Esophagus squamous epithelium (tissue), 5 donors: ENCODE measurements at regions of chr18 and their contacts with region 1.

Region 1: DNA sequence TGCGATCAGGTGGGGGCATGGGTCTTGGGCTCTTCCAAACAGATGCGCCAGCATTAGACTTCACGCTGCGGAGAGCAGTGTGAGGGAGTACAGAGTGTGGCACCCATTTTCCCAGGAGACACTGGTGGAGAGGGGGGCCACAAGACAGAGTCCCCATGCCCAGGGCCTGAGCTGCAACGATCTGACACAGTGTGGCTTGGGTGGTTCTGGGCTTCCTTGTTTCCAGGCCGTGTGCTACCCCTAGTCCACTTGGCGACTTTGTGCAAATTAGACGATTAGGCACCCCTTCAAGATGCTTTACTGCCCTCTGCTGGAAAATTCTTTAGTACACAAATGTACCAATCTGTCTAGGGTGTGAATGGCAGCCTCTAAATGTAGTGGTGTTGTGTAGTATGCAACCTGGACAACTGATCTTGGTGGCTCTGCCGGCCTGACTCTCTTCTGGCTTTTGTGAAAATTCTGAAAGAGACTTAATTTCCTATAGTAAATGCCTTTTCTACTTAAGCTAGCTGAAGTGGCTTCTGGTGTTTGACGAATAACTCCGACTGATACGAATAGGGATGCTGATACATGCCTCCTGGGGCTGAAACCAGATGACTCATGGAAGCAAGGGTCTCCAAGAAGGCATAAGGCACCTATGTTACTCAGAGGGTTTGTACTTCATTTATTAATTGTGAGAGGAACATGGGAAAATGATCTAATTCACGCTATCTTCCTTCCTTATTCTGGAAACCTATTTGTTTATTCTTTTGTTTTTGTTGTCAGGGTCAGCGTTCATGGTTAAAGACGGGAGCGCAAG is 92.3 kb upstream of the SMAD2 start:
- DNase-seq: no peak
- H3K4me3 ChIP-seq: no peak overlapping the region
- H3K27ac ChIP-seq: peak overlapping the region in 2 of 4 donors; percentile 55 to 65
- H3K4me1 ChIP-seq: peaks cover 18 to 73% (median 21%) of the 10 kb centered on the region in 3 donors
- H3K27me3 ChIP-seq: peaks cover 0 to 19% (median 0%) of the 10 kb centered on the region in 4 donors
- CTCF ChIP-seq: peak in 5 of 6 experiments; percentile 44 to 72 (median 53)
- POLR2A ChIP-seq: no peak

Region 2: DNA sequence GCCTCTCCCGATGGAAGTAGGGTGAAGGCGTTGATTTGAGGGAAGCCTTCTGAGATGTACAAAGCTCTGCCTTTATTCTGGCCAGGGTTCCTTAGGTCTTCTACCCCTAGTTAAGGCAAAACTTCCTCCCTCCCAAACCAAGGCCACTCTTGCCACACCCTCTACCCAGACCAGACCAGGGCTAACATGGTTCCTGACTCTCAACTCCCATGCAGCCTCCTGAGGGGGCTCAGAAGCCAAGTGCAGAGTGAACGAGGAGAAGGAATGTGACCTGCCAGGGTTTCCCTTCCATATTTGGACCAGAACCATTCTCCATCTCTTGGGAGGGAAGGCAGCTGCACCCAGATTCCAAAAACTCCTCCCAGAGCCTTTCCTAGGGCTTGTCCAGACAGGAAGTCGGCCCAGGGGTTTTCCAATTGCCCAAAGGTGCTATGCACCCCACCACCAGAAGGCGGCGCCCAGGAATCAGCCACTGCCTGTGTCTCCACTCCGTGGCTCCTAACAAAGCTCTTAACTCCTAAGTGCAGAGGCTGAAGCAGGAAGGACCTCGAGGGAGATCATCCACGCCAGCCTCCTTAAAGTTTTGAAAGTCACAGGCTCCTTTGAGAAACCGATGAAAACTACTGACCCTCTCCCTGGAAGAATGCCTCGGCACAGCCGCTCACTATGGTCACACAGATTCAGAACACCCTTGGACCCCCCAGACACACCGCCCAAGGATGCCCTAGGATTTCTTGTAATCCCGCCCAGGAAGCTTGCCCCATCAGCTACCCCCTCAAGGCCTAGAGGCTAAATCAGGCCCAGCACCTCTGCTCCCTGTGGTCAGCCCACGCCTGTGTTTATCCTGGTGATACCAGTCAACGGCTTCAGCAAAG is 250.1 kb before region 1 on chr18:
- intact Hi-C with region 1: loop called (anchors 5 kb)
- DNase-seq: no peak
- H3K4me3 ChIP-seq: no peak overlapping the region
- H3K27ac ChIP-seq: no peak overlapping the region
- H3K4me1 ChIP-seq: peaks cover 0 to 4% (median 0%) of the 10 kb centered on the region in 3 donors
- H3K27me3 ChIP-seq: peaks cover 0 to 14% (median 0%) of the 10 kb centered on the region in 4 donors
- CTCF ChIP-seq: peak; percentile 47 to 90 (median 78)
- POLR2A ChIP-seq: no peak

Region 3: GRCh38 chr18:48317781-48318381 is 295.2 kb after region 1 on chr18:
- intact Hi-C with region 1: no loop called
- DNase-seq: no peak
- H3K4me3 ChIP-seq: no peak overlapping the region
- H3K27ac ChIP-seq: no peak overlapping the region
- H3K4me1 ChIP-seq: peaks cover 0 to 26% (median 0%) of the 10 kb centered on the region in 3 donors
- H3K27me3 ChIP-seq: no peaks in the 10 kb centered on the region
- CTCF ChIP-seq: peak in 2 of 6 experiments; percentile 5 to 23
- POLR2A ChIP-seq: no peak